Right cardiac atrium (tissue), 5 donors: ENCODE measurements at regions of chr7 and their contacts with region 1.

Region 1: DNA sequence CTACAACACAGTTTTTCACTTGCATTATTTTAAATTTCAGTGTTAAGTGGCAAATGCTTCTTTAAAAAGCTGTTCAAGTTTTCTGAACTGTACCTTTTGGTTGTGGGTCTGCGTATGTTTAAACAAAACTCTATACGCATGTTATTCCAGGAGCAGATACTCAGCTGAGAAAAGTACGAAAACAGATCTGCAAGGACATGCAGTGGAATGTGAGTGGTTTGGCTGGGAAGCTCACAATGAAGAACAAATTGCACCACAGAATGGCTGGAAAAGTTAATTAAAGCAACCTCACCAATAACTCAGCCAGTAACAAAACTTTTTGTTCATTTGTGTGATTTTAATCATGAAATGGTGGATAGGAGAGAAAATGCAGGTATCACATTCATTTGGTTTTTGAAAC is 17.6 kb downstream of the GLI3 start:
- DNase-seq: no peak
- ATAC-seq: no peak
- H3K4me3 ChIP-seq: no peak overlapping the region
- H3K27ac ChIP-seq: no peak overlapping the region
- H3K4me1 ChIP-seq: no peaks in the 10 kb centered on the region
- H3K27me3 ChIP-seq: no peaks in the 10 kb centered on the region

Region 2: GRCh38 chr7:40959955-40960354 is 1259.5 kb before region 1 on chr7:
- intact Hi-C with region 1: no loop called
- DNase-seq: no peak
- ATAC-seq: no peak
- H3K4me3 ChIP-seq: no peak overlapping the region
- H3K27ac ChIP-seq: no peak overlapping the region
- H3K4me1 ChIP-seq: no peaks in the 10 kb centered on the region
- H3K27me3 ChIP-seq: no peaks in the 10 kb centered on the region

Region 3: GRCh38 chr7:42107484-42108245 is 111.8 kb before region 1 on chr7:
- intact Hi-C with region 1: loop called in 1 of 4 experiments (anchors 10 kb)
- DNase-seq: no peak
- ATAC-seq: peak; percentile 72 to 87
- H3K4me3 ChIP-seq: no peak overlapping the region
- H3K27ac ChIP-seq: no peak overlapping the region
- H3K4me1 ChIP-seq: peaks cover 9% of the 10 kb centered on the region
- H3K27me3 ChIP-seq: no peaks in the 10 kb centered on the region

Region 4: GRCh38 chr7:42128703-42129102 is 90.7 kb before region 1 on chr7:
- intact Hi-C with region 1: no loop called
- DNase-seq: no peak
- ATAC-seq: no peak
- H3K4me3 ChIP-seq: no peak overlapping the region
- H3K27ac ChIP-seq: no peak overlapping the region
- H3K4me1 ChIP-seq: no peaks in the 10 kb centered on the region
- H3K27me3 ChIP-seq: no peaks in the 10 kb centered on the region

Region 5: GRCh38 chr7:42372479-42372878 is 153.0 kb after region 1 on chr7:
- intact Hi-C with region 1: no loop called
- DNase-seq: no peak
- ATAC-seq: no peak
- H3K4me3 ChIP-seq: no peak overlapping the region
- H3K27ac ChIP-seq: no peak overlapping the region
- H3K4me1 ChIP-seq: no peaks in the 10 kb centered on the region
- H3K27me3 ChIP-seq: no peaks in the 10 kb centered on the region